A549 (cell line): ENCODE measurements at regions of chr3 and their contacts with region 1.

Region 1: GRCh38 chr3:14203521-14204079 is 25.0 kb downstream of the LSM3 start:
- DNase-seq: peak; percentile 79
- ATAC-seq: peak; percentile 84 to 92
- H3K4me3 ChIP-seq: no peak overlapping the region
- H3K27ac ChIP-seq: no peak overlapping the region
- H3K4me1 ChIP-seq: no peaks in the 10 kb centered on the region
- CTCF ChIP-seq: peak; percentile 86
- EP300 ChIP-seq: no peak
- POLR2A ChIP-seq: no peak
- RAD21 ChIP-seq: peak; percentile 83 to 86

Region 2: GRCh38 chr3:14064910-14065309 is 138.7 kb before region 1 on chr3:
- CTCF ChIA-PET with region 1: no interaction called
- POLR2A ChIA-PET with region 1: no interaction called
- DNase-seq: no peak
- ATAC-seq: no peak
- H3K4me3 ChIP-seq: no peak overlapping the region
- H3K27ac ChIP-seq: no peak overlapping the region
- H3K4me1 ChIP-seq: no peaks in the 10 kb centered on the region
- CTCF ChIP-seq: no peak
- EP300 ChIP-seq: no peak
- POLR2A ChIP-seq: no peak
- RAD21 ChIP-seq: no peak

Region 3: DNA sequence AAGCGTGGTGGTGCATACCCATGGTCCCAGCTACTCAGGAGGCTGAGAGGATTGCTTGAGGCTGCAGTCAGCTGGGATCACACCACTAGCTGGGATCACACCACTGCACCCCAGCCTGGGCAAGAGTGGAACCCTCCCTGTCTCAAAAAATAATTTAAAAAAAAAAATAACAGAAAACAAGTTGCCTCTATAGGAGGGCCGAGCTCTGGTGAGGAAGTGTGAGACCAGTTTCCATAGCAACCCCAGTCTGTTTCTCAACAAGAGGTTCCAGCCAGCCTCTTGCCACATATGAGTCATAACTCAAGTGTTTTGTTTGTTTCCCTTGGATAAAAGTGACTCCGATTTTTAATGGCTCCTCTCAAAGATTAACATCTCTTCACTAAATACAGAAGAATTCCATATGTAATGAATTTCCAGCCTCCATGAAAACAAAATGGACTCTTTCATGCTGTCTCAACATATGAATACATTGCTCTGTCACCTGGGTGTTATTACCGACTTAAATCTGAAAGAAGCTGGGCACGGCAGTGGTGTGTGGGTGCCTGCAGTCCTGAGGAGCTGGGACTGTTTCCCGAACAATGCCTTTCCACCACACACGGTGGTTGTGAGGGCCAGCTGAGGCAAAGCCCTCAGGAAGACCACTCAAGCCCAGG is 59.1 kb before region 1 on chr3:
- CTCF ChIA-PET with region 1: interaction called, 10 read pairs
- POLR2A ChIA-PET with region 1: no interaction called
- DNase-seq: peak; percentile 95 to 98
- ATAC-seq: peak; percentile 70 to 81
- H3K4me3 ChIP-seq: peak overlapping the region; percentile 23; the same call in 1 of the 3 replicates
- H3K27ac ChIP-seq: peak overlapping the region; percentile 76 to 88
- H3K4me1 ChIP-seq: peaks cover 31% of the 10 kb centered on the region
- CTCF ChIP-seq: no peak
- EP300 ChIP-seq: no peak
- POLR2A ChIP-seq: no peak
- RAD21 ChIP-seq: no peak

Region 4: DNA sequence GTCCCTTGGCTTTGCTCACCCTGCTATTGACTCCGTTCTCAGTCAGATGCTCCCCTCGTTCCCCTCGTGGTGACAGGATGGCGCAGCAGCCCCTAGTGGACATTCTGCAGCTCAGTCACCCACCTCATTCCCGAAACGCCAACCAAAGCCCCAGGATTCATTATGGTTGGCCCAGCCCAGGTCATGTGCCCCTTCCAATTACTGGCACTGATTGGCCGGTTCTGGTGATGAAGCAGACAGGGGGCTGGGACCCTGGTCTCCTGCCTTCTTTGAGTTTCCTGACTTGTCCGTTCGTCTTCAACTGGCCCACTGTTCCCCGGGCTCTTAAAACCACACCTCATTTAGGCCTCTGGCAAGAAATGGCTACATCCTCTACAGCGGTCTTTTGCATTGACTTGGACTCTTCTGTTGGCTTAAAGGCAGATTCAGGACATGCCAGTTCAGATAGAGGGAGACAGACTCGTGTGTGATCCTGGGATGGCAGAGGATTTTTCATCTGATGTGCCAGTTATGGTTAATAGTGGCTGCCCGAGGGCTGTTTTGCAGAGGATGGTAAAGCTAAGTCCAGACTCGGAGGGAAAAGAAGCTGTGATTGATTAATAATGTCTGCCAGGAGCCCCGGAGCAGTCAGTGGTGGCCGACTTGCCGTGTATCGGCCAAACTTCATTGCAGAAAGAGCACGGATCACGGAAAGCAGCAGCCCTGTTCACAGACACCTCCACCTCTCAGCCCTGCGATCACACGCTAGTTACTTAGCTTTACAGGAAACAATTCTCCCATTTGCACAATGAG is 12.9 kb after region 1 on chr3:
- CTCF ChIA-PET with region 1: interaction called, 69 read pairs
- POLR2A ChIA-PET with region 1: no interaction called
- DNase-seq: peak in 1 of 2 experiments; percentile 32
- ATAC-seq: peak; percentile 41 to 87; a peak in 4 of 6 replicates
- H3K4me3 ChIP-seq: no peak overlapping the region
- H3K27ac ChIP-seq: no peak overlapping the region
- H3K4me1 ChIP-seq: no peaks in the 10 kb centered on the region
- CTCF ChIP-seq: no peak
- EP300 ChIP-seq: no peak
- POLR2A ChIP-seq: no peak
- RAD21 ChIP-seq: no peak

Region 5: GRCh38 chr3:14261229-14261628 is 57.6 kb after region 1 on chr3:
- CTCF ChIA-PET with region 1: interaction called, 18 read pairs
- POLR2A ChIA-PET with region 1: no interaction called
- DNase-seq: peak; percentile 87 to 90
- ATAC-seq: peak; percentile 80 to 90
- H3K4me3 ChIP-seq: no peak overlapping the region
- H3K27ac ChIP-seq: no peak overlapping the region
- H3K4me1 ChIP-seq: peaks cover 13% of the 10 kb centered on the region
- CTCF ChIP-seq: peak; percentile 95
- EP300 ChIP-seq: no peak
- POLR2A ChIP-seq: no peak
- RAD21 ChIP-seq: peak; percentile 98 to 99

Region 6: GRCh38 chr3:14461748-14462324 is 258.2 kb after region 1 on chr3:
- CTCF ChIA-PET with region 1: interaction called, 64 read pairs
- POLR2A ChIA-PET with region 1: no interaction called
- DNase-seq: peak; percentile 71 to 79
- ATAC-seq: peak; percentile 75 to 82
- H3K4me3 ChIP-seq: no peak overlapping the region
- H3K27ac ChIP-seq: peak overlapping the region; percentile 21 to 61; a peak in 3 of 6 replicates
- H3K4me1 ChIP-seq: peaks cover 44% of the 10 kb centered on the region
- CTCF ChIP-seq: peak; percentile 62
- EP300 ChIP-seq: no peak
- POLR2A ChIP-seq: no peak
- RAD21 ChIP-seq: peak; percentile 82

Region 7: GRCh38 chr3:14548321-14548729 is 344.7 kb after region 1 on chr3:
- CTCF ChIA-PET with region 1: interaction called, 34 read pairs
- POLR2A ChIA-PET with region 1: no interaction called
- DNase-seq: peak; percentile 67 to 76
- ATAC-seq: peak; percentile 86 to 96
- H3K4me3 ChIP-seq: no peak overlapping the region
- H3K27ac ChIP-seq: peak overlapping the region in 1 of 2 experiments; percentile 28; a peak in 1 of 6 replicates
- H3K4me1 ChIP-seq: peaks cover 16% of the 10 kb centered on the region
- CTCF ChIP-seq: peak; percentile 78
- EP300 ChIP-seq: no peak
- POLR2A ChIP-seq: no peak
- RAD21 ChIP-seq: peak; percentile 73 to 82